ENCODE measurements at regions of chrX and their contacts with region 1.

Region 1: GRCh38 chrX:100413229-100413628 is 3.2 kb upstream of the PCDH19 start:
- DNase-seq: no peak
- ATAC-seq: peak; percentile 78
- H3K4me3 ChIP-seq: no peak overlapping the region
- H3K27ac ChIP-seq: no peak overlapping the region
- H3K4me1 ChIP-seq: no peaks in the 10 kb centered on the region
- H3K27me3 ChIP-seq: peaks cover 10% of the 10 kb centered on the region; the same call in 1 of the 2 replicates
- CTCF ChIP-seq: peak; percentile 58

Region 2: GRCh38 chrX:99301990-99302389 is 1111.2 kb before region 1 on chrX:
- CTCF ChIA-PET with region 1: interaction called, 7 read pairs
- POLR2A ChIA-PET with region 1: no interaction called
- in situ Hi-C with region 1: no loop called
- intact Hi-C with region 1: loop called (anchors 10 kb)
- DNase-seq: no peak
- ATAC-seq: no peak
- H3K4me3 ChIP-seq: no peak overlapping the region
- H3K27ac ChIP-seq: no peak overlapping the region
- H3K4me1 ChIP-seq: no peaks in the 10 kb centered on the region
- H3K27me3 ChIP-seq: no peaks in the 10 kb centered on the region
- CTCF ChIP-seq: peak; percentile 53; the same call in 1 of the 2 replicates

Region 3: GRCh38 chrX:100368167-100368566 is 45.1 kb before region 1 on chrX:
- CTCF ChIA-PET with region 1: interaction called, 3 read pairs
- POLR2A ChIA-PET with region 1: no interaction called
- in situ Hi-C with region 1: no loop called
- intact Hi-C with region 1: loop called (anchors 5 kb)
- DNase-seq: peak; percentile 8
- ATAC-seq: no peak
- H3K4me3 ChIP-seq: no peak overlapping the region
- H3K27ac ChIP-seq: no peak overlapping the region
- H3K4me1 ChIP-seq: no peaks in the 10 kb centered on the region
- H3K27me3 ChIP-seq: no peaks in the 10 kb centered on the region
- CTCF ChIP-seq: peak; percentile 61

Measured in Panc1 (cell line).